ENCODE measurements at regions of chr11 and their contacts with region 1.

Region 1: DNA sequence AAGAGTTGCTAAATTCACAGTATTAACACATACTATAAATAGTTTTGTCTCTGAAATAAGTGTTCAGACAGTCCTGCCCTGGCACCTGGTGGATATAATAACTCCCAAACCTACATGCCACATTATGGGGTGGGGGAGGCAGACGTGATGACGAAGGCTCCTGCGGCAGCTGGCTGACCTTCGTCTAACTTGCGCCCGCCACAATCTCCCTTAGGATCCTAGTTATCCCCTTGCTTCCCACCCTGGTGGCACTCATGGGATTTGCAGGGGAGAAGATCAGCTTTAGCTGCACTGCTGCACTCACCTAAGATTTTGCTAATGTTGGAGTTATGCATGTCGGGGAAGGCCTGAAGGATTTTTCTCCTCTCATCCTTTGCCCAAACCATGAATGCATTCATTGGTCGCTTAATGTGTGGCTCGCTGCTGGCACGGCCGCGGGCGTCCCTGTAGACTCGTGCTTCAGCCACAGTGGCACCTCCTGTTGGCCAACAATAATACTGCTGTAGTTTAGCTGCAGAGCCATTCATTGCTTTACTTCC is 367.6 kb downstream of the SOX6 start:
- DNase-seq: no peak
- ATAC-seq: peak; percentile 71
- H3K4me3 ChIP-seq: no peak overlapping the region
- H3K27ac ChIP-seq: no peak overlapping the region
- H3K4me1 ChIP-seq: no peaks in the 10 kb centered on the region
- H3K27me3 ChIP-seq: no peaks in the 10 kb centered on the region
- CTCF ChIP-seq: peak; percentile 40 to 52 (median 49); a peak in 4 of 6 replicates
- EP300 ChIP-seq: no peak
- POLR2A ChIP-seq: no peak
- RAD21 ChIP-seq: peak in 1 of 2 experiments; percentile 17; a peak in 2 of 4 replicates

Region 2: DNA sequence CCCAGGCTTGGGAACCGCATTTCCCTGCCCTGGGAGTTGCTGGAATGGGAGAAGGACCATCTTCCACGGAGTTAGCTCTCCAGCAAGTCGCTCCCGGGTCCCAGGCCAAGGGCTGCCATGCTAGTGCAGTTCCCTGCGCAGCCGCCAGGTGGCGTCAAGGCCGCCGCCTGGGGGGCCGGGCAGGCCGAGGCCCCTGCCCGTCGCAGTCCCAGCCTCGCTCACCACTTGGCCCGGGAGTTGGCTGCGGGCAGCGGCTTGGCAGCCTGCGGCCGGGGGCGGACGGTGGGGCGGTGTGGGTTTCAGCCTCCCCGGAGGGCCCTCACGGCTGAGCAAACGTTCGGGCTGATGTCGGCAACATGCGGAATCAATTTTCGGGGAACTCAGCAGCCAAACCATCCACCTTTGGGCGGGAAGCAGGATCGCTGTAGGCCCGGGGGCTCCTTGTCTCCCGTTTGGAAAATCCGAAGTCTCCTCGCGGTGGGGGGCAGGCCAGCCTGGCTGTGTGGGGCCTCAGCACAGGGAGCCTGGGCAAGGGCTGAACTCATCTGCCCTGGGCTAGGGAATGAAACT is 47.5 kb before region 1 on chr11:
- CTCF ChIA-PET with region 1: no interaction called
- POLR2A ChIA-PET with region 1: no interaction called
- in situ Hi-C with region 1: no loop called
- intact Hi-C with region 1: loop called (anchors 5 kb)
- DNase-seq: peak; percentile 76 to 96 (median 92)
- ATAC-seq: peak; percentile 97
- H3K4me3 ChIP-seq: no peak overlapping the region
- H3K27ac ChIP-seq: no peak overlapping the region
- H3K4me1 ChIP-seq: peaks cover 0 to 14% of the 10 kb centered on the region in 2 experiments; a peak in 3 of 5 replicates
- H3K27me3 ChIP-seq: peaks cover 0 to 13% of the 10 kb centered on the region in 2 experiments; a peak in 3 of 5 replicates
- CTCF ChIP-seq: peak; percentile 88 to 97 (median 93)
- EP300 ChIP-seq: no peak
- POLR2A ChIP-seq: no peak
- RAD21 ChIP-seq: peak; percentile 89 to 91

Region 3: GRCh38 chr11:16028419-16028818 is 39.7 kb after region 1 on chr11:
- CTCF ChIA-PET with region 1: no interaction called
- POLR2A ChIA-PET with region 1: no interaction called
- in situ Hi-C with region 1: no loop called
- intact Hi-C with region 1: no loop called
- DNase-seq: no peak
- ATAC-seq: no peak
- H3K4me3 ChIP-seq: no peak overlapping the region
- H3K27ac ChIP-seq: no peak overlapping the region
- H3K4me1 ChIP-seq: peaks cover 0 to 8% of the 10 kb centered on the region in 2 experiments; a peak in 2 of 5 replicates
- H3K27me3 ChIP-seq: no peaks in the 10 kb centered on the region
- CTCF ChIP-seq: no peak
- EP300 ChIP-seq: no peak
- POLR2A ChIP-seq: no peak
- RAD21 ChIP-seq: no peak